Activated CD4-positive, alpha-beta T cell treated with anti-CD3 and anti-CD28 coated beads for 36 hours (primary cell): ENCODE measurements at regions of chr19 and their contacts with region 1.

Region 1: DNA sequence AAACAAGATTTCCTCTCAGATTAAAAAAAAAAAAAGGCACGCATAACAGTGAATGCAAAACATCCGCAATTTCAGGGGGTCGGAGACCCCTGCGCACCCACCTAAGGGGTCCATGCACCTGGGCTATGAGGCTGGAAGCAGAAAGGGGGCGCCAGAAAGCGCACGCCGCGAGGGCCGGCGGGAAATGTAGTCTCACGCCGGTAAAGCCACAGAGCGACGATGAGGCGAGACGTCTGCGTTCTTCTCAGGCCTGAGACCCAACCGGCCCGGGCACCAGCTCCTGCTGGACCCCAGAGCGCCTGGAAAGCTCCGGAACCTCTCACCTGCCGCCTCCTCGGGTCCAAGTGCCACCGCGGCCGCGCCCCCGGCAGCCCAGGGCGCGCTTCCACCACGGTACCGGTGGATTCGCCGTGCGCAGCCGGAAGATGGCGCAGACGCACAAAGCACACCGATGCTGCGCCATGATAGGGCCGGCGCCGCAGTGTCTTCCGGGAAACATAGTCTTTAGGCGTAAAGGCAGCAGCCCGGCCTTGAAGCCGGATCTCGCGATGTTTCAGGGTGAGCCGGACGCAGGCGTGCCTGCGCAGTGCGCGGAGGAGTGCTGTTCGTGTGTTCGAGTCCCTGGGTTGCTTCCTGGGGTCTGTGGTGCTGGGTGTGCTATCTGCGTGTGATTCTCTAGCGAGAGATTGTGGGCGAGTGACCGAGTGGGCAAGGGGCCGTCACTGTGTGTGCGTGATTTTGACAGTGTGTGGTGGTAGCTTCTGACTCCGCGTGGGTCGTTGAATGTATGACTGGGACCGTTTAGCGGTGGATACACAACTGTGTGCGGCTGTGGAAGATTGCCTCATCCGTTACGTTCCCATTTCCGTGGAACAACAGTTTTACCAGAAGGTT is at the start of gene ZNF582:
- DNase-seq: peak; percentile 97
- ATAC-seq: peak; percentile 99
- H3K4me3 Mint-ChIP-seq: peak within 1 kb of the TSS; percentile 84
- H3K27ac Mint-ChIP-seq: peak within 1 kb of the TSS; percentile 96
- H3K4me1 Mint-ChIP-seq: peaks cover 11% of the 10 kb centered on the region
- H3K27me3 Mint-ChIP-seq: no peaks in the 10 kb centered on the region
- total RNA-seq, gene ZNF582: 0.98 to 1.8 TPM

Region 2: DNA sequence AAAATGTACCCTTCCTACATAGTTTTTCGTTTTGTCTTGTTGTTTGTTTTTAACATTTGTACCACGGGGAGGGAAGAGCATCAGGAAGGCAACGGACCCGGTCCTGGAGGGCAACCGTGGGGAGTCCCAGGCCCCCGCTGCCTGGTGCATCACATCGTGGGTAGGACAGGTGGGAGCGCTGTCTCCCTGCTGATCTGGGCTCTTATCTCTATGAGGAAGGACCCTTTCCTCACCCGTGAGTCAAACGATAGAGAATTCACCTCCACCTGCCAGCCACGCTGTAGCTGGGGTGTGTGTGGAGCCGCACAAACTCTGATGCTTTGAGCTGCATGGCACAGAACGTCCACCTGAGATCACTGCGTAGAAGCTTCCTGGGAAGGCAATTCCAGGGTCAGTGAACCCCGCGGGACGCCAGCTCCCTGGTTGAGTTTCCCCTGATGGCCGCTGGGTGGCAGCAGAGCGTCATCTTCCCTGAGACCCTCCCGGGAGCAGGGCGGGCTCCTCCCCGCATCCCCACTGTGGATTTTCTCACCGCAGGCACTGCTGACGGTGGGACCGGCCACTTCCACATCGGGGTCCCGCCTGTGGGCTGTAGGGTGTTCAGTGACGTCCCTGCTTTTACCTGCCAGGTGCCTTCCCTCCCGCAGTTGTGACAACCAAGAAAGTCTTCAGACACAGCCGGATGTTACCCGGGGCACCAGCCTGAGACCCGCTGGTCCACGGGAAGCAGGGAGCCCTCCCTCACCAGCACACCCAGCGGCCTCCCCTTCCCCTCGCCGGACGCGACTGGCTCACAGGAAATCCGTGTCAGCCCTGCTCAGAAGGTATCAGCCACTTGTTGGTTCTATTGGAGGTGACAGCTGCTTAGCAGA is 327.0 kb before region 1 on chr19:
- CTCF ChIA-PET with region 1: no interaction called
- POLR2A ChIA-PET with region 1: no interaction called
- intact Hi-C with region 1: no loop called
- DNase-seq: peak; percentile 75
- ATAC-seq: peak; percentile 69
- H3K4me3 Mint-ChIP-seq: peak overlapping the region; percentile 50
- H3K27ac Mint-ChIP-seq: no peak overlapping the region
- H3K4me1 Mint-ChIP-seq: peaks cover 11% of the 10 kb centered on the region
- H3K27me3 Mint-ChIP-seq: peaks cover 16% of the 10 kb centered on the region

Region 3: DNA sequence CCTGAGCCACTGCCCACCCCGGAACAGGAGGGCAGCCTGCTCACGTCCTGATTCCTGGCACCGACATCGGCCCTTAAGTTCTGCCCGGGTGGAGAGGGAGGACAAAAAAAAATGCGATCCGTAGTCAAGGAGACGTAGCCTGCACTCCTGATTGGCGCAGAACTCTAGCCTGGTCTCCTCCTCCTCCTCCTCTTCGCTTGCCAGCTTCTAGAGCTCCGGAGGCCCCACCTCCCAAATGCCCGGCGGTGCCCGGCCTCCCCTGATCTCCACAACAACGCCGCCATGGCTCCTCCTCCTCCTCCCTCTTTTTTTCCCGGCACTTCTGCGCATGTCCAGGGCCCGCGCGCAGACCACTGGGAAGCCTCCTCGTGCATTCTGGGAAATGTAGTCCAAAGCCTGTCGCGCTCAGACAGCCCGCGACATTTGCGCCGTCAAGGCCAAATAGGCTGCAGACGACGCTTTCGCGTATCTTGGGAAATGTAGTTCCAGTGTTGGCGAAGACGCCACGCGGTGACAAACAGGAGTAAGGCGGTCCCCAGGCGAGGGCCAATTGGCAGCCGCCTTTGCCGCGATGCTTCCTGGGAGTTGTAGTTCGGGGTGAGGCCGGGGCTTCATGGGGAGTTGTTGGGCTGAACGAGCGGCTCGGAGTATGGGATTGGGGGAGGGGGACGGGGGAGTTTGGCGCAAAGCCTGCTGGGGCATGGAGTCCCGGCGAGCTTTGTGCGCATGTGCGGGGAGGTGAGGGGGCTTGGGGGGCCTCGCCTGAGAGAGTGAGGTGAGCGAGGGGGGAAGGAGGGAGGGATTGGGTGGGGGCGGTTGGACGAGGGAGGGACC is 252.6 kb before region 1 on chr19 and contains the start of gene ZNF444:
- CTCF ChIA-PET with region 1: no interaction called
- POLR2A ChIA-PET with region 1: no interaction called
- intact Hi-C with region 1: loop called in 1 of 2 experiments (anchors 1 kb)
- DNase-seq: peak; percentile 99
- ATAC-seq: peak; percentile 90
- H3K4me3 Mint-ChIP-seq: peak within 1 kb of the TSS; percentile 89
- H3K27ac Mint-ChIP-seq: peak within 1 kb of the TSS; percentile 94
- H3K4me1 Mint-ChIP-seq: peaks cover 31% of the 10 kb centered on the region
- H3K27me3 Mint-ChIP-seq: no peaks in the 10 kb centered on the region
- total RNA-seq, gene ZNF444: 29.2 to 32.2 TPM

Region 4: DNA sequence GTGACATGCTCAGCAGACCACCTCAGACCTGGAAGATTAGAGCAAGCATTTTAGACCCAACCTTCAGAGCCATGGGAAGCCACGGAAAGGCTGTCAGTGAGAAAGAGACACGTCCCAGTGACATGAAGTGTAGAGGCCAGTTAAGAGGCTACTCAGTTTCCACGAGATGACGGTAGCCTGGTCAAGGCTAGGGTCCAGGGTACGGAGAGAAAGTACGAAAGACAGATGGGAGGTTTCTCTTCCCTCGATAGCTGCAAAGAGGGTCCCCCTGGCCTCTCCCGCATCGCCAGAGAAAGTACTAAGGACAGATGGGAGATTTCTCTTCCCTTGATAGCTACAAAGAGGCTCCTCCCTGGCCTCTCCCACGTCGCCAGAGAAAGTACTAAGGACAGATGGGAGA is 87.3 kb before region 1 on chr19:
- CTCF ChIA-PET with region 1: no interaction called
- POLR2A ChIA-PET with region 1: no interaction called
- intact Hi-C with region 1: no loop called
- DNase-seq: no peak
- ATAC-seq: no peak
- H3K4me3 Mint-ChIP-seq: no peak overlapping the region
- H3K27ac Mint-ChIP-seq: no peak overlapping the region
- H3K4me1 Mint-ChIP-seq: peaks cover 15% of the 10 kb centered on the region
- H3K27me3 Mint-ChIP-seq: no peaks in the 10 kb centered on the region

Region 5: GRCh38 chr19:56403764-56404704 is 10.7 kb after region 1 on chr19 and contains the start of gene ZNF583:
- CTCF ChIA-PET with region 1: no interaction called
- POLR2A ChIA-PET with region 1: no interaction called
- intact Hi-C with region 1: loop called (anchors 1 kb)
- DNase-seq: peak; percentile 94
- ATAC-seq: peak; percentile 84
- H3K4me3 Mint-ChIP-seq: peak within 1 kb of the TSS; percentile 80
- H3K27ac Mint-ChIP-seq: peak within 1 kb of the TSS; percentile 80
- H3K4me1 Mint-ChIP-seq: peaks cover 32% of the 10 kb centered on the region
- H3K27me3 Mint-ChIP-seq: no peaks in the 10 kb centered on the region
- total RNA-seq, gene ZNF583: 2.1 to 3.0 TPM

Region 6: GRCh38 chr19:56507446-56508289 is 114.3 kb after region 1 on chr19 and contains the start of gene ZNF471:
- CTCF ChIA-PET with region 1: no interaction called
- POLR2A ChIA-PET with region 1: no interaction called
- intact Hi-C with region 1: loop called in 1 of 2 experiments (anchors 1 kb)
- DNase-seq: peak; percentile 96
- ATAC-seq: peak; percentile 99
- H3K4me3 Mint-ChIP-seq: no peak within 1 kb of the TSS
- H3K27ac Mint-ChIP-seq: peak within 1 kb of the TSS; percentile 12
- H3K4me1 Mint-ChIP-seq: peaks cover 5% of the 10 kb centered on the region
- H3K27me3 Mint-ChIP-seq: peaks cover 2% of the 10 kb centered on the region
- total RNA-seq, gene ZNF471: 1.4 to 1.5 TPM

Region 7: DNA sequence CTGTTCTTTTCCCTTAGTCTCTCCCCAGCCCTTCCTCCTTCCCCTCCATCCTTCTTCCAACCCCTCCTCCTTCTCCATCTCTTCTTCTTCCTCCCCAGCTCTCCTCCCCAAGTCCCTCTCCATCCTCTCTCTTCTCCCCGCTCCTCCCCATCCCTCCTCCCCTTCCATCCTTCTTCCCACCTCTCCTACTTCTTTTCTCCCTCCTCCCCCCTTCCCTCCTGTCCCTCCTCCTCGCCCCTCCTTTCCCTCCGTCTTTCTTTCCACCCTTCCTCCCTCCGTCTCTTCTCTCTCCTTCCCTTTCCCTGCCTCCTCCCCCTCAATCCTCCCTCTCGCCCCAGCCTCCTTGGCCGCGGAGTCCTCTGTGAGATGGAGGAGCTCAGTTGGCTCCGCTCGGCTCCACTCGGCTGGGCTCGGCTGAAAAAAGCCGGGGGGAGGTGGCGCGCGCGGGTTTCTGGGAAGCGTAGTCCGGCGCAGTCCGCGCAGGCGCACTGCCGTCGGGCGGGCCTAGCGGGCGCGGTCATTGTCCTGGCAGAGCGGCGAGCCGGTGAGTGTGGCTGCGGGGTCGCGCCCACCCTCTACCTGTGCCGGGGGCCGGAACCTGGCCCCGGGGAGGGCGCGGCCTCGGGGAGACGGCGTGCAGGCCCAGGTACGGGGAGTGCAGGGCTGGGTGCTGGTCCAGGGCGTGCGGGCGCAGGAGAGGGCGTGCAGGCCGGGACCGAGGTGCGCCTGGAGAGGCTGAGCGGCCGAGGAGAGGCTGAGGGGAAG is 201.6 kb after region 1 on chr19 and contains the start of gene ZNF71:
- CTCF ChIA-PET with region 1: no interaction called
- POLR2A ChIA-PET with region 1: no interaction called
- intact Hi-C with region 1: loop called (anchors 1 to 10 kb)
- DNase-seq: peak; percentile 94
- ATAC-seq: peak; percentile 98
- H3K4me3 Mint-ChIP-seq: peak within 1 kb of the TSS; percentile 87
- H3K27ac Mint-ChIP-seq: peak within 1 kb of the TSS; percentile 71
- H3K4me1 Mint-ChIP-seq: peaks cover 19% of the 10 kb centered on the region
- H3K27me3 Mint-ChIP-seq: no peaks in the 10 kb centered on the region
- total RNA-seq, gene ZNF71: 4.4 to 4.6 TPM

Region 8: GRCh38 chr19:57320180-57321084 is 927.1 kb after region 1 on chr19 and contains the start of gene ZNF543:
- CTCF ChIA-PET with region 1: no interaction called
- POLR2A ChIA-PET with region 1: no interaction called
- intact Hi-C with region 1: loop called in 1 of 2 experiments (anchors 1 kb)
- DNase-seq: peak; percentile 97
- ATAC-seq: peak; percentile 98
- H3K4me3 Mint-ChIP-seq: peak within 1 kb of the TSS; percentile 94
- H3K27ac Mint-ChIP-seq: peak within 1 kb of the TSS; percentile 93
- H3K4me1 Mint-ChIP-seq: peaks cover 24% of the 10 kb centered on the region
- H3K27me3 Mint-ChIP-seq: peaks cover 22% of the 10 kb centered on the region
- total RNA-seq, gene ZNF543: 5.8 to 6.2 TPM